PC-9 (cell line): ENCODE measurements at regions of chr9 and their contacts with region 1.

Region 1: GRCh38 chr9:35657546-35658136 is at the start of gene RMRP:
- DNase-seq: peak; percentile 91
- H3K4me3 ChIP-seq: peak within 1 kb of the TSS; percentile 72
- H3K27ac ChIP-seq: peak within 1 kb of the TSS; percentile 94
- H3K4me1 ChIP-seq: peaks cover 26% of the 10 kb centered on the region
- H3K27me3 ChIP-seq: no peaks in the 10 kb centered on the region
- CTCF ChIP-seq: no peak; the same call in 1 of the 2 replicates
- total RNA-seq, gene RMRP: 13,432 and 13,506 TPM in 2 replicates

Region 2: DNA sequence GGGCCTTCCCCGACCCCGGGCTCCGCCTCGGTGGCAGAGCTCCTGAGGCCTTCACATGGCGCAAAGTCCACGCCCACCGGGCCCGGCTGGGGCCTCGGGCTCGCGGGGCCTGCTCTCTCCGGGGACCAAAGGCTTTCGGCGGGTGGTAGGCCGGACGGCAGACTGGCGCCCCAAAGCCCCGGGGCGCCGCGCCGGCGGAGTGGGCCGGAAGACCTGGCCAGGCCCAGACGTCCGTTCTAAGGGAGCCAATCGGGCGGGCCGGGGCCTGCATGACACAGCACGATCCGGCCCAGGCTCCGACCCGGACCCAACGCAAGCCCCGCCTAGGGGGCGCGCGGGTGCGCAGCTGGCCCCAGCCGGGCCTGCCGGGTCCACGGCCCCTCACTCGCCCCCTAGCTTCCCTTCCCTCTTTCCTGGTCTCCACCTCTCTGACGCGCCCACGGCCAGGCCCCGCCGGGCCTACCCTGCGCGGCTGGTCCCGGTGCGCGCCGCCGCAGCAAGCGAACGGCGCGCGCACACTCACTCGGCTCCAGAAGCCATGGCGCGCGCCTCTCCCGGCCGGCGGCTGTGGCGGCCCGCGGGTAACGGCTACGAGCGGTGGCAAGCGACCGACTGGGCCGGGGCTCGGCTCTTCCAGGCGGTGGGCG is 585.7 kb before region 1 on chr9:
- CTCF ChIA-PET with region 1: no interaction called
- POLR2A ChIA-PET with region 1: interaction called, 13 read pairs
- intact Hi-C with region 1: no loop called
- DNase-seq: peak; percentile 48 to 65
- H3K4me3 ChIP-seq: peak overlapping the region; percentile 91
- H3K27ac ChIP-seq: peak overlapping the region; percentile 97
- H3K4me1 ChIP-seq: peaks cover 17% of the 10 kb centered on the region
- H3K27me3 ChIP-seq: no peaks in the 10 kb centered on the region
- CTCF ChIP-seq: peak; percentile 29; the same call in 1 of the 2 replicates

Region 3: GRCh38 chr9:35603987-35604577 is 53.6 kb before region 1 on chr9:
- CTCF ChIA-PET with region 1: no interaction called
- POLR2A ChIA-PET with region 1: no interaction called
- intact Hi-C with region 1: loop called (anchors 1 kb)
- DNase-seq: peak; percentile 94 to 97
- H3K4me3 ChIP-seq: peak overlapping the region; percentile 75
- H3K27ac ChIP-seq: peak overlapping the region; percentile 71
- H3K4me1 ChIP-seq: peaks cover 14% of the 10 kb centered on the region; the same call in 1 of the 2 replicates
- H3K27me3 ChIP-seq: no peaks in the 10 kb centered on the region
- CTCF ChIP-seq: peak; percentile 80

Region 4: DNA sequence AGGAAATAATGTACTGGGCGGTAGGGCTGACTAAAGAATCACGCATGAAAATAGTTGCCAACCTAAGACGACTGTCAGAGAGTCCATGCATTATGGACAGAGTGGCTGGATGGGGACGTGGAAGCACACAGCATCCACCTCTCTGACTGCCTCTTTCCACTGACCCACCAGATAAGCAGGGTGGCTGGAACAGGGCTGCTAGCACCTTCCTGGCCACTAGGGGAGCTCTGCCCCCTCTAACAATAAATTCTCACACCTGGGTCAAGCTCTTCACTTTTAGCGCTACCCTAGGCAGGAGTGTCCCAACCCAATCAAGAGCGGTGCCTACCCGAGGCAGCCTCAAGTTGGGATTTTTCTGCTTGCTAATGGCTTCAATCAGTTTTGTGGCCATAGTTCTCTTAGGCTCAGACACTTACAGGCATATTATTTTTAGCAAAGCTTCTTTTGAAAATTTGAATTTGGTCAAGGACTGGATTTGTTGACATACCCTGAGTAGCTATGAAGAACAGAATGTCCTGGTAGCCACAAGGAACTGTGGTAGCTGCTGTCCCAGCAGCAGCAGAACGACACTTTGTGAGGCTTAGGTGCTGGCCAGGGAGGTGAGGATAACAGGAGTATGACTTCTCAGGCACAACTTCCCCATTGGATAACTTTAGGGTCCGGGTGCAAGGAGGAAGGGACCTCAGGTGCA is 39.0 kb after region 1 on chr9:
- CTCF ChIA-PET with region 1: interaction called, 5 read pairs
- POLR2A ChIA-PET with region 1: no interaction called
- intact Hi-C with region 1: loop called (anchors 5 kb)
- DNase-seq: peak in 1 of 2 experiments; percentile 35
- H3K4me3 ChIP-seq: no peak overlapping the region
- H3K27ac ChIP-seq: no peak overlapping the region
- H3K4me1 ChIP-seq: no peaks in the 10 kb centered on the region
- H3K27me3 ChIP-seq: no peaks in the 10 kb centered on the region
- CTCF ChIP-seq: peak; percentile 83

Region 5: DNA sequence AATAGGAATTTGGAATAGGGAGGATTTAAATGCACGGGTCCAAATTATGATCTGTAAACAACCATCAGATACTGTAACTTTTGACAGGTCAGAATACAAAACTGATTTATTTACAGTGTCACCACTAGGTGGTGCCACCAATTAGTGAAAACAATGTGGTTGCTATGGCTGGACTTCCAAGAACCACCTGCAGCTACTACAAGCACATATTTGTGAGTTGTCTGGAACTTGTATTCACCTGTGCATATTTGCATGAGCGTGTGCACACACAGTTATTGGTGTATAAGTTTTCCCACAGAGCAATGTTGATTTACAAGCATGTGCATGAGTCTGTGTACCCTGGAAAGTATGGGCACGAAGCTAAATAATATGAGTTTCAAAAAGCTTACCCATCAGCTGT is 245.4 kb after region 1 on chr9:
- CTCF ChIA-PET with region 1: no interaction called
- POLR2A ChIA-PET with region 1: no interaction called
- intact Hi-C with region 1: loop called (anchors 5 kb)
- DNase-seq: peak in 1 of 2 experiments; percentile 54
- H3K4me3 ChIP-seq: no peak overlapping the region
- H3K27ac ChIP-seq: no peak overlapping the region
- H3K4me1 ChIP-seq: peaks cover 38% of the 10 kb centered on the region
- H3K27me3 ChIP-seq: no peaks in the 10 kb centered on the region
- CTCF ChIP-seq: peak; percentile 78